ENCODE measurements at regions of chr5 and their contacts with region 1.

Region 1: DNA sequence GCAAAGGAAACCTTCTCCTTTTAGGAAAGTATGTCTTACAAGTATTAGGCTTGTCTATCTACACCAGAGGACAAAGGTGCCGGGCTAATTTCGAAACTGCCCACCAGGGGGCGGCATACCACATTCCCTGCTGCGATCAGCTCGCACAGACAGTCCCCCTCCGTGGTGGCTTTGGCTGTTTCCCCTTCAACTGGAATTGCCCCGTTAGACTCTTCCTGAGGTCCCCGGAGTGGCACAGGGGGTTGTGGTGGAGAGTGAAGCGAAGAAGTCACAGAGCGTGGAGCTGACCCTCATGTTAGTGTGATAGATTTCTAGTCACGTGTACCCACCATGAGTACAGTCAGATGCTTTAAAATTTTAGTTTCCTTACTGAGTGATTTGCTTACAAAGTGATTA is 17.5 kb downstream of the PTTG1 start:
- DNase-seq: peak; percentile 77
- H3K4me3 ChIP-seq: peak overlapping the region; percentile 51 to 65
- H3K27ac ChIP-seq: no peak overlapping the region
- H3K4me1 ChIP-seq: peaks cover 0 to 9% of the 10 kb centered on the region in 2 experiments; a peak in 2 of 4 replicates
- H3K27me3 ChIP-seq: no peaks in the 10 kb centered on the region
- CTCF ChIP-seq: peak; percentile 95
- EP300 ChIP-seq: no peak
- RAD21 ChIP-seq: peak; percentile 61

Region 2: DNA sequence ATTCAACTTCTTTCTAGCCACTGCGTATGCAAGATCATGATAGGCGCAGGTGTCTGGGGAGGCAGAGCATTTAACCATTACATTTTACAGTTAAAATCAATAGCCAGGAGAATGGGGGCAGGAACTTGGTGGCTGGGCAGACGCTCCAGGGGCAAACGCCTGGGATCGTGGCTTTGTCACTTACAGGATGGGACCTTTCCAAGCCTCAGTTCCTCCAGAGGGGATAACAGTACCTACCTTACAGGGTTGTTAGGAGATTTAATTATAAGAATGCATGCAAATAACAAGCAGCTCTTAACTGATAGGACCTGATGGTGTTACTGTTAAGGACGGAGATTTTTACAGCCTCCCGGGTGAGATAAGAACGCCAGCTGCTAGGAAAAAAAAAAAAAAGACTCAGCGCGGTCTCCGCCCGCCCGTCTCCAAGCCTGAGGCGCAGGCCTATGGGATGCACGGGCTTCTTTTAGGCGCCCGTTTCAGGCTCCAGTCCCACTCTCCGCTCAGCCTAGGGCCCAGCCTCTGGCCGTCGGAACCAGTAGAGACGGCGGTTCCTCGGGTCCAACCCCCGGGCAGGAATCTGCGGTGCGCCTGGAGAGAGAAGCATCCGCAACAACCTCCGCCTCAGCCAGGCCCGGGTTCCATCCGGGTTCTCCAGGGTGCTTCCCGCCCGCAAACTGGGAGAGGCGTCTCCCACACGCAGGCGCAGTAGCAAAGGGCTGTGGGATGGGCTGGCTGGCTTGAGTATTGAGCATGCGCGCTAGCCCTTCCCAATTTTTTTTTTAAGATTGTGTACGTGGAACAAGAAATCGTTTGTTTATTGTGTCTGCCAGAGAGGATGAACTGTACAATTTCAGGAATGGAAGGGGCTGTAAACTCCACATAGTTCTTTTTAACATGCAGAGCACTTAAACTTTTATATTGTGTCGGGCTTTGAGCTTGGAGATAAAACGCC is 39.5 kb before region 1 on chr5 and contains the start of gene FAM200C:
- CTCF ChIA-PET with region 1: interaction called, 10 read pairs
- POLR2A ChIA-PET with region 1: no interaction called
- DNase-seq: peak; percentile 96
- H3K4me3 ChIP-seq: peak within 1 kb of the TSS; percentile 80 to 85
- H3K27ac ChIP-seq: peak within 1 kb of the TSS; percentile 84 to 96
- H3K4me1 ChIP-seq: peaks cover 0 to 9% of the 10 kb centered on the region in 2 experiments; a peak in 2 of 4 replicates
- H3K27me3 ChIP-seq: no peaks in the 10 kb centered on the region
- CTCF ChIP-seq: no peak
- EP300 ChIP-seq: no peak
- RAD21 ChIP-seq: no peak
- polyA plus RNA-seq, gene FAM200C: 1.5 and 2.2 TPM in 2 replicates

Region 3: DNA sequence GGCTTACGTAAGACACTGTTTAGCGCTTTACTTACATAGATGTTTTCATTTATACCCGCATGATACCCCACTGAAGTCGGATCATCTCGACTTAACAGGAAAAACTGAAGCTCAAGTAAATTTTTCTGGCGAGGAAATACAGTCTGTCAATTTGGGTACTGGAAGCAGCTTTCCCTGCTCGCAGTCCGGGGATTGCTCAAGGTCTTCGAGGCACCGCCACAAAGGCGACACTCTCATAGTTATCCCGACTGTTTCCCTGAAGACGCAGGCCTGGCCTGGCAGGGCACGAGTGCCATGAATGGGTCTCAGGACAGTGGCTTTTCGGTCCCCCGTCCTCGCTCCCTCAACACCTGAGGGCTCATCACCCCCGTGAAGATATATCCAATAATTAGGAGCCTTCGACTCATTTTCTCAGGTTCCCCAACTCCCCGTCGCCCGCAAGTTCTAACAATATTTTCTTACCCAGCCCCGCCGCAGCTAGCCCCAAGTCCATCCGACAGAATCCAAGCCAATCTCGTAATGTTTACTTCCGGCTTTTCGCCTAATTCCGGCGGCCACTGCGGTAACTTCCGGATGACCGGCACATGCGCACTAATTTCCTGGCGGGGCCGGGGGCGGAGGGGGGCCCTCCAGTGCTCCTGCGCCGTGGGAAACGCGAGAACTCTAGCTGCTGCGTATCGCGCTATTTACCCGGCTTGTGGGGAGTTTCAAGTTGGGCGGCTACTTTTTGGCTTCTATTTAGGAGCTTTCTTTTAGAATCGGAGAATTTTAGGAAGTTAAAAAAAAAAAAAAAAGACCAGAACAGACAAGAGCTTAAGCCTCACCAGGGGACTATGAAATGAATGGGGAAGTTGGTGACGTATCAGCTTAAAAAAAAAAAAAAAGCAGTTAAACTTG is 20.4 kb before region 1 on chr5 and contains the start of gene SLU7:
- CTCF ChIA-PET with region 1: interaction called, 177 read pairs
- POLR2A ChIA-PET with region 1: no interaction called
- DNase-seq: peak; percentile 89
- H3K4me3 ChIP-seq: peak within 1 kb of the TSS; percentile 76 to 100
- H3K27ac ChIP-seq: peak within 1 kb of the TSS; percentile 91
- H3K4me1 ChIP-seq: peaks cover 1 to 25% of the 10 kb centered on the region in 2 experiments; a peak in 3 of 4 replicates
- H3K27me3 ChIP-seq: no peaks in the 10 kb centered on the region
- CTCF ChIP-seq: no peak
- EP300 ChIP-seq: no peak
- RAD21 ChIP-seq: no peak
- polyA plus RNA-seq, gene SLU7: 22.3 and 28.3 TPM in 2 replicates

Region 4: DNA sequence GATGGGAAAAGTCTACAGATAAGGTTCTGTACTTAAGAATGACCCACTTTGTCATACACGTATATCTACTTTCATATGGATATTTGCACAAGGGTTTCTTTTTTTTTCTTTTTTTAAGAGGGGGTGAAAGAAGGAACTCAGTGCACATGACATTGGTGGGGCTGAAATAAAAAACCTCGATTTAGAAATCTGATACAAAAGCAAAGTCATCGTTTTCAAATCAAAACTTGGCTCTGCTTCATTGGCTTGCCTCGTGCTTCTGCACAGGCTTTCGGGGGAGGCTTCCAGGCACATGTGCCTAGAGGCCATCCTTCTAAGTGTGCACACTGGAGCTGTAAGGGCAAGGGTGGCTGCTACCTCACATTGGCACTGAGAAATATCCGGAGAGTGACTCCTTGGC is 13.6 kb after region 1 on chr5:
- CTCF ChIA-PET with region 1: interaction called, 32 read pairs
- POLR2A ChIA-PET with region 1: no interaction called
- DNase-seq: no peak
- H3K4me3 ChIP-seq: no peak overlapping the region
- H3K27ac ChIP-seq: no peak overlapping the region
- H3K4me1 ChIP-seq: no peaks in the 10 kb centered on the region
- H3K27me3 ChIP-seq: no peaks in the 10 kb centered on the region
- CTCF ChIP-seq: no peak
- EP300 ChIP-seq: no peak
- RAD21 ChIP-seq: no peak

Region 5: GRCh38 chr5:160458806-160459800 is 19.9 kb after region 1 on chr5:
- CTCF ChIA-PET with region 1: interaction called, 32 read pairs
- POLR2A ChIA-PET with region 1: no interaction called
- DNase-seq: no peak
- H3K4me3 ChIP-seq: no peak overlapping the region
- H3K27ac ChIP-seq: no peak overlapping the region
- H3K4me1 ChIP-seq: peaks cover 0 to 5% of the 10 kb centered on the region in 2 experiments; a peak in 2 of 4 replicates
- H3K27me3 ChIP-seq: no peaks in the 10 kb centered on the region
- CTCF ChIP-seq: no peak
- EP300 ChIP-seq: no peak
- RAD21 ChIP-seq: no peak

Region 6: DNA sequence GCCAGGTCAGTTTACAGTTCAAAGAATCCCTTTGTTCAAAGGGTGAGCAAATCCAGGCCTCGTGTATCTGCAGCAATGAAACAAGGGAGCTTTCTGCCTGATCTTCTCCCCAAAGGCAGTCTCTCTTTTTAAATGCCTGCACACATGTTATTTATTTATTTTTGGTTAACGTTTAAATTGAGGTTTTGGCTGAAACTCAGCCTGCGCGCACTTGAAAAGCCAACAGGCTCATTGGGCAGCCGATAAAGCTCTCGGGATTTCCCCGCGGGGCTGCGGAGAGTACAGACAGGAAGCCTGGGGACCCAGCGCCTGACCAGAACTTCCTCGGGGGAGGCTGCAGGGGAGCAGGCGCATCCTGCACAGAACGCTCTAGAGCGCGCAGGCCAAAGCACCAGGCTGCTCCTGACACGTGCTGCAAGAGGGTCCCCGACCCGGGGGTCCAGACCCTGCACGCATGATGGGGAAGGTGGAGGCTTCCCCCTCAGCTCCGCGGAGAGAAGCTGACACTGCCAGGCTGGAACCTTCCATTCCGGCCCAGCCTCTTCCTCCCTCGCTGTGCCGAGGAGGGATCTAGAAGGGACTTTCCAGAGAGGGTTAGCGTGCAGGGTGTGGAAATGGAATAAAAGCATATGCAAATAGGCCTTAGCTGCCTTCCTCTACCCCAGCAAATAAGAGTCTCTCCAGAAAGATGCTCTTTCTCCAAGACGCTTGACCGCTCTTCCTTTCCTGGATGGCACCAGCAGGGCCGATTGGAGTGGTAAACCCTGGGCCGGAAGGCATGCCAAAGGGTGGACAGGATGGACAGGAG is 28.6 kb after region 1 on chr5:
- CTCF ChIA-PET with region 1: interaction called, 29 read pairs
- POLR2A ChIA-PET with region 1: no interaction called
- DNase-seq: peak; percentile 16
- H3K4me3 ChIP-seq: no peak overlapping the region
- H3K27ac ChIP-seq: peak overlapping the region in 1 of 2 experiments; percentile 54; a peak in 2 of 4 replicates
- H3K4me1 ChIP-seq: peaks cover 0 to 21% of the 10 kb centered on the region in 2 experiments; a peak in 3 of 4 replicates
- H3K27me3 ChIP-seq: no peaks in the 10 kb centered on the region
- CTCF ChIP-seq: no peak
- EP300 ChIP-seq: peak in 1 of 2 experiments; percentile 75; a peak in 2 of 4 replicates
- RAD21 ChIP-seq: no peak

Region 7: DNA sequence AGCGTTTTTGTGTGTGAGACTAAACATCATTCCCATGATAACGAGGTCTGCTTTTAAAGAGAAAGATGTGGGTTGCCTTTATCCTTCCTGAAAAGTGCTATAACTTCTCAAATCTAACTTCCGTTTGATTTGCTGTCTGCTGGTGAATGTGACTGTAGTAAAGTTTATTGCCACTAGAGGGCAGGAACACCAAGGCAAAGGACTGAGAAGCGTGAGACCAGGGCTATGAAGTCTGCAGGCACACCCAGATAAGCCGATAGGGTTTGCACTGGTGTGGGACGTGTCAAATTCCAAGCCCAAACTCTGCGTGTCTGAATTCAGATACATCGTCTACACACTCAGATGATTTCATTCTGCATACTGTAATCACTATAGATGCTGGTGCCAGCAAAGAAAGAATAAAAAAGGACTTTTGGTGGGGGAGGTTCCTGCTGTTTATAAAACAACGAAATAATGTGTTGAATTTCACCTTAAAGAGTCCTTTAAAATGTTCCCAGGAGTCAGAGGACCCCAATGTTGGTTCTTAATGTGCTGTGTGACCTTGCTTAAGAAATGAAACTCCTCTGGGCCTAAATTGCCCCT is 69.7 kb after region 1 on chr5:
- CTCF ChIA-PET with region 1: interaction called, 10 read pairs
- POLR2A ChIA-PET with region 1: no interaction called
- DNase-seq: peak; percentile 70
- H3K4me3 ChIP-seq: peak overlapping the region in 1 of 2 experiments; percentile 6; a peak in 1 of 4 replicates
- H3K27ac ChIP-seq: no peak overlapping the region
- H3K4me1 ChIP-seq: no peaks in the 10 kb centered on the region
- H3K27me3 ChIP-seq: no peaks in the 10 kb centered on the region
- CTCF ChIP-seq: peak; percentile 89
- EP300 ChIP-seq: no peak
- RAD21 ChIP-seq: peak; percentile 96